ENCODE measurements at regions of chr19 and their contacts with region 1.

Region 1: GRCh38 chr19:34171877-34172660 is at the start of gene LSM14A:
- DNase-seq: peak; percentile 82 to 96
- H3K4me3 ChIP-seq: peak within 1 kb of the TSS; percentile 91 to 98
- H3K27ac ChIP-seq: peak within 1 kb of the TSS; percentile 99
- H3K4me1 ChIP-seq: peaks cover 6 to 38% of the 10 kb centered on the region in 2 donors
- H3K27me3 ChIP-seq: no peaks in the 10 kb centered on the region
- CTCF ChIP-seq: peak in 1 of 3 experiments; percentile 12
- total RNA-seq, gene LSM14A: 107 TPM

Region 2: DNA sequence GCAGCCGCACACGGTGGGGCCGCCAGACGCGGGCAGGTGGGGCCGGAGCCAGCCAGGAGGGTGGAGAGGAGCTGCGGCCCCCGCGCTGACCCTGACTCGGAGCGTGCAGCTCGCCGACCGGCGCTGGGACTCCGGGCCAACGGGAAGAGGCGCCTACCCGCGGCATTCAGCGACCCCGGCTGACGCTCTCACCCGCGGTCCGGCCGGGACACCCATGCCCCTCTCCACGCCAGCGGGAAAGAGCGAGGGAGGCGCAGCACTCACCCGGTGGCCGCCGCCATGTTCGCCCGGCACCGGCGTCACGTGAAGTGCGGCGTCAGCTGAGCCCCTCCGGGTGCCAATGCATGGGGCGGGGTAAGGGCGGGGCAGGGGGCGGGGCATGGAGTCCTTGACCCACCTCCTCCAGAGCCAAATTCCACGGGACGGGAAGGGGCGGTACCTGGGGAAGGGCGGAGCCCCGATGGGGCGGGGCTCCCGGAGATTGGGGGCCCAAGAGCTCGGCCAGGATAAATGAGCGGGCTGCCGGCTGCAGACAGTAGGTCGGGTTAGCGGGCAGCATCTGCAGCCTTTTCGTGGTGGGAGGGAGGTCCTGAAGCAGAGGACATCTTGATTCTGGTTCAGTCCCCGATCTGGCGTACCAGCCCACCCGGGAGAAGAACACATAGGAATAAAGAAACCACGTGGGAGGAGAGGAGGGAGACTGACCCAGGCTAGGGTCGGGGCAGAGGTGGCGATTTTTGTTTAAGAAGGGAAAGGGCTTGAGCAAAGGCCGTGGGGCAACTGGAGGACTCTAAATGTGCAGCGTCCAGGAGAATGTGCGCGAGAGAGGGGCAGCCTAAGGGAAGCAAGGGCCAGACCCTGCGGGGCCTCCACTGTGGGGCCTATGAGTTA is 650.3 kb before region 1 on chr19 and contains the start of gene PEPD:
- intact Hi-C with region 1: loop called (anchors 2 kb)
- DNase-seq: peak; percentile 60 to 95
- H3K4me3 ChIP-seq: peak within 1 kb of the TSS; percentile 60 to 89
- H3K27ac ChIP-seq: peak within 1 kb of the TSS in 1 of 2 donors; percentile 4
- H3K4me1 ChIP-seq: peaks cover 4 to 7% of the 10 kb centered on the region in 2 donors
- H3K27me3 ChIP-seq: no peaks in the 10 kb centered on the region
- CTCF ChIP-seq: no peak
- total RNA-seq, gene PEPD: 112 TPM

Region 3: GRCh38 chr19:34041925-34042521 is 130.0 kb before region 1 on chr19:
- intact Hi-C with region 1: no loop called
- DNase-seq: peak in 1 of 2 donors; percentile 83
- H3K4me3 ChIP-seq: no peak overlapping the region
- H3K27ac ChIP-seq: no peak overlapping the region
- H3K4me1 ChIP-seq: no peaks in the 10 kb centered on the region
- H3K27me3 ChIP-seq: no peaks in the 10 kb centered on the region
- CTCF ChIP-seq: peak; percentile 43 to 62 (median 54)

Region 4: DNA sequence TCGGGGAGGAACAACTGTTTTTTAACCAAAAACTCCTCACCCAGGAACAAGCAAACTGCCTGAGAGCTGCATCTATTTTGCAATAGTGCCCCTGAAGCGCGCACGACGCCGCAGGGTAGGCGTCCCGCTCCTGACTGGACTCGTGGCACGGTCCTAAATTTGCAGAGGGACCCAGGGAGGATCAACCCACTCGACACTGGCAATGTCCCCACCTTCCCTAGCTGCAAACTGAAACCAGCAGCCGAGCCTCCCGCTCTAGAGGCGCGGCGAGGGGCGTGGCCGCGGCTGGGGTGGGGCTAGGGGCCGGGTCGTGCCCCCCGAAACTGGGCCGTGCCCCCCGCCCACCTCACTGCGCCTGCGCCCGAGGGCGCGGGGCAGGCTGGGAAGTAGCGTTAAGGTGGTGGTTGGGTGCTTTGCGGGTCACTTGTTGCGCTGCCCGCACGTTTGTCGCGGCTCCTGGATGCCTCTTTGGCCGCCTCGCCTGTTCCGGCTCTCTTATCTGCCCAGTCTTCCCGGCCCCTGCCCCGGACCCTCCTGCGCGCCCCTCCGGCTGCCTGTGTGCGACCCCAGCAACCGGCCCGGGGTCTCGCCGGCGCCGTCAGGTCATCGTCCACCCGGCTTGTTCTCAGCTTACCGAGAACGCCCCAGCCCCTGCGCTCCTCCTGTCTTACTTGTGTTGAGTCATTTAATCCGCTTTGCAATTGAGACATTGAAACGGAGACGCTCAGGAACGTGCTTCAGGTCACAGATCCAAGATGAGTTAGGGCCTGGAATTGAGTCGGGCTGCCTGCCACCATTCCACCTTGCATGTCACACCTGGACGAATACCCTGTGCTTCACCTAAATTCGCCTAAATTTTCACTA is 37.6 kb before region 1 on chr19:
- intact Hi-C with region 1: loop called (anchors 2 kb)
- DNase-seq: peak; percentile 27 to 90
- H3K4me3 ChIP-seq: peak overlapping the region; percentile 64 to 77
- H3K27ac ChIP-seq: peak overlapping the region; percentile 88 to 95
- H3K4me1 ChIP-seq: peaks cover 0 to 4% of the 10 kb centered on the region in 2 donors
- H3K27me3 ChIP-seq: no peaks in the 10 kb centered on the region
- CTCF ChIP-seq: no peak

Region 5: DNA sequence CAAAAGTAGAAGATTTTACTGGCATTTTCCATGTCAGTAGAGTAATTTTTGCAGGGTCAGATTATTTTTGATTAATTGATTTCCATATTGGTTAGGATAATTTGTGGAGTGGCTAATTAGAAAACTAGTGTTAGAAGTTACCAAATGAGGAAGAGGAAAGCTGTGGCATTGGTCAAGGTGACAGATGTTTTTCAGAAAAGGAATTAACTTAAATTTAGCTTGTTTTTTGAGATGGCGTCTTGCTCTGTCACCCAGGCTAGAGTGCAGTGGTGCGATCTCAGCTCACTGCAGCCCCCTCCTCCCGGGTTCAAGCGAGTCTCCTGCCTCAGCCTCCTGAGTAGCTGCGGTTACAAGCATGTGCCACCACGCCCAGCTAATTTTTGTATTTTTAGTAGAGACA is 29.1 kb after region 1 on chr19:
- intact Hi-C with region 1: no loop called
- DNase-seq: no peak
- H3K4me3 ChIP-seq: no peak overlapping the region
- H3K27ac ChIP-seq: no peak overlapping the region
- H3K4me1 ChIP-seq: no peaks in the 10 kb centered on the region
- H3K27me3 ChIP-seq: no peaks in the 10 kb centered on the region
- CTCF ChIP-seq: no peak

Region 6: DNA sequence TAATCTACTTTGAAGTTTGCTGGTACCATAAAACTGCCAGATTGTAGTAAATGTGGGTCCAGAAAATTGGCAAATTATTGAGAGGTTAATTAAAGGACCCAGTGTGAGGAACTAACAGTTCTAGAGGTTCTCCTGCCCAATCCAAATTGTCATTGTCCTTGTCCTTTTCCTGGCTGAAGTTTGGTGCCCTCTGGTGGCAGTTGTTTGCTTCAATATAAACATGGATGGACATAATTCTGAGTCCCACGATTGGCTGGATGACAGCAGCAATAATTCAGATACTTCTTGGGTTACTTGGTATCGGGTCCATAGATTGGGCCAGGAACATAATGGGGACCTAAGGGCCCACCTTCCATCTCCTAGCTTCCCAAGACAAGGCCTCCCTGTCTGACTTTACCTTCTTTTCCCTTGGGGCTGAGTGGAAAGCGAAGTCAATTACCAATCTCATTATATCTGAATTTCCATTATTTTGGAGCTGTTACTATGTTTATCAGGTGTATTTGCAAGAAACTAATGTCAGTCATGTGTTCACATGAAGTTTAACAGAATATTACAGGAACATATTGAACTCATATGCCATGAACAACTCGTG is 48.5 kb after region 1 on chr19:
- intact Hi-C with region 1: loop called (anchors 5 kb)
- DNase-seq: peak in 1 of 2 donors; percentile 82
- H3K4me3 ChIP-seq: no peak overlapping the region
- H3K27ac ChIP-seq: no peak overlapping the region
- H3K4me1 ChIP-seq: peaks cover 0 to 4% of the 10 kb centered on the region in 2 donors
- H3K27me3 ChIP-seq: no peaks in the 10 kb centered on the region
- CTCF ChIP-seq: peak; percentile 52 to 71 (median 54)

Region 7: DNA sequence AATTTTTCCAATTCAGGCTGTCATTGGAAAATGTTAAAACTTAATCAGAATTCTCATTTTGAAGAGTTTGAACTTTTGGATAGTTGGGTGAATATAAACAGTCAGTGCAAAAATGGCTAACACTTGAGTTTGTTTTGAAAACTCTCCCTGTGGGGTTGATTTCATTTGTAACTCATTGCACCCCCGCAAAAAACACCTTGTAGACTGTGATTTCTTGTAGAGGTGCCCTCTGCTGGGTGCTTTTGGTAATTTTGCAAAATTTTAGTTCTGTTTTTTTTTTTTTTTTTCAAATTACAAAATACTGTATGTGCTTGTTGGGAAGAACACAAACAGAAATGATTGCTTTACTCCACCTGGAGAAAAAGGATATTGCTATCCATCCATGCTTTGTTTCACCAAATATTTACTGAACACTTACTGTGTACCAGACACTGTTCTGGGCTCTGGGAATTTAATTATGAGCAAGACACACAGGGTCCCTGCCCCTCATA is 164.8 kb after region 1 on chr19:
- intact Hi-C with region 1: loop called (anchors 5 kb)
- DNase-seq: peak in 1 of 2 donors; percentile 12
- H3K4me3 ChIP-seq: no peak overlapping the region
- H3K27ac ChIP-seq: peak overlapping the region; percentile 50 to 56
- H3K4me1 ChIP-seq: peaks cover 0 to 8% of the 10 kb centered on the region in 2 donors
- H3K27me3 ChIP-seq: no peaks in the 10 kb centered on the region
- CTCF ChIP-seq: peak; percentile 51 to 64 (median 60)

Region 8: GRCh38 chr19:34391813-34392212 is 219.7 kb after region 1 on chr19:
- intact Hi-C with region 1: no loop called
- DNase-seq: no peak
- H3K4me3 ChIP-seq: no peak overlapping the region
- H3K27ac ChIP-seq: no peak overlapping the region
- H3K4me1 ChIP-seq: no peaks in the 10 kb centered on the region
- H3K27me3 ChIP-seq: no peaks in the 10 kb centered on the region
- CTCF ChIP-seq: no peak

Measured in ascending aorta (tissue), 2 donors.